B cell (primary cell): ENCODE measurements at regions of chr2 and their contacts with region 1.

Region 1: GRCh38 chr2:130824492-130825061 is 12.1 kb upstream of the ARHGEF4 start:
- DNase-seq: peak; percentile 59
- ATAC-seq: peak; percentile 90
- H3K4me3 ChIP-seq: no peak overlapping the region
- H3K4me3 Mint-ChIP-seq: peak overlapping the region; percentile 64
- H3K27ac ChIP-seq: no peak overlapping the region
- H3K27ac Mint-ChIP-seq: peak overlapping the region; percentile 89
- H3K4me1 ChIP-seq: peaks cover 0 to 17% of the 10 kb centered on the region in 2 donors
- H3K4me1 Mint-ChIP-seq: peaks cover 16% of the 10 kb centered on the region
- H3K27me3 ChIP-seq: no peaks in the 10 kb centered on the region
- H3K27me3 Mint-ChIP-seq: peaks cover 3% of the 10 kb centered on the region
- CTCF ChIP-seq: no peak

Region 2: DNA sequence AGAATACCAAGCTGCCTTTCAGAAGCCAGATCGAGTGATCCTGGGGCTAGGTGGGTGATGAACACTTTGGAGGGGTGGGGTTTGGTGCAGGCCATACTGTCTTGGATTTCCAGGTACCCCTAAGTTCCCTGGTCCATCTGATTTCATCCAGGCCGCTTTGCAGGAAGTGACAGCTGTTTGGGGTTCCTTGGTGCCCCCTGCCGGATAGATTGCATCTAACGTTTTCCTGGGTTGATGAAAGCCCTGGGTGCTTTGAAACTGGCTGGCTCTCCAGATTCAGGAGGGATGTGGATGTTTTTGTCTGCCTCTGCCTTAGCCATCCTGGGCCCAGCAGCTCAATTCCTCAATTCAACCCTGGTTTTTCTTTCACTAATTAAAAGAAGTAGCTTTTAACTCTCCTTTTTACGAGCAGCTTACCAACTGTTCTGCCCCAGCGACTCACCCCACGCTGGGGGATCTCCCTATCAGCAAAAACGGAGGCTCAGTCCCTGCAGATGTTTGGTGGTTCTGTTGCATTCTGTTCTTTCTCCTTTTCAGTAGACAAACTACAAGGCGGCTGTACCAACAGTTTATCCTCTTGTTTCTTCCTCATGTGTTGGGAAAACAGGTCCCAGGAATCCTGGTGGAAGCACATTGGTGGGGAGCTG is 49.2 kb after region 1 on chr2:
- CTCF ChIA-PET with region 1: interaction called, 10 read pairs
- POLR2A ChIA-PET with region 1: no interaction called
- intact Hi-C with region 1: loop called (anchors 1 kb)
- DNase-seq: peak; percentile 65
- ATAC-seq: peak; percentile 78
- H3K4me3 ChIP-seq: no peak overlapping the region
- H3K4me3 Mint-ChIP-seq: no peak overlapping the region
- H3K27ac ChIP-seq: no peak overlapping the region
- H3K27ac Mint-ChIP-seq: no peak overlapping the region
- H3K4me1 ChIP-seq: peaks cover 4 to 7% of the 10 kb centered on the region in 2 donors
- H3K4me1 Mint-ChIP-seq: peaks cover 8% of the 10 kb centered on the region
- H3K27me3 ChIP-seq: no peaks in the 10 kb centered on the region
- H3K27me3 Mint-ChIP-seq: peaks cover 12% of the 10 kb centered on the region
- CTCF ChIP-seq: peak; percentile 60

Region 3: DNA sequence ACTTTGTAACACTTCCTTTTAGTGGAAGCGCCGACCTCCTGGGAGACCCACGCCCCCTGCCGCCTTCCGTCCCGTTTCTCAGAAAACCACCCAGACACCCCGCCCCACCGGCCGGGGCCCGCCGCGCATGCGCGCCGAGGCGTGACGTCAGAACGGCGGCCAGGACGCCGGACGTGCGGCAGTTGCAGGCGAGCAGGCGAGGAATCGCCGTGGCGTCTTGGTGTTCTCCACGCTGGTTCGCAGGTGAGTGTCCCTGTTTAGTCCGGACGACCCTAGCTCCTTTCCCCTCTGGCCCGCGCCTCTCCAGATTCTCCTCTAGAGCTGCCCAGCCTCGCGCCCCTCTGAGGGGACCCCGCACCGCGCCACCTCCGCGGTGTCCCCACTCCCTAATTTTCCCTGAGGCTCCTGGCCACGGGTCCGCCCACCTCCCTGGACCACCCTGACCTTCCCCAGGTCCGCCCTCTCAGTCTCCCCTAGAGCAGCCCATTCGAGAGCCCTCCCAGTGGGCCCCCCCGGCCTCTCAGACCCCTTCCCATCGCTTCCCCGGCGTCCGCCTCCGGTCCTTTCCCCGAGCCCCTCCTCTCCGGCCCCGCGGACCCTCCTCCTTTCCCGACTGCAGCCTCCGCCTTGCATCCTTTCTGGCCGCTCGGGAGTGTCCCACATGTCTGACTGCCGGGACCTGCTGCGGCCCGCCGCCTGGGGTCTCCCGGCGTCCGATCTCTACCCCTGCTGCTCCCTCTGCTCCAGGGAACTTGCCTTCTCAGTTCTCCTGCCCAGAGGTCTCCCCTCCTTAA is 280.8 kb after region 1 on chr2 and contains the start of gene PLEKHB2:
- CTCF ChIA-PET with region 1: no interaction called
- POLR2A ChIA-PET with region 1: no interaction called
- intact Hi-C with region 1: loop called (anchors 1 kb)
- DNase-seq: peak; percentile 95
- ATAC-seq: peak; percentile 88
- H3K4me3 ChIP-seq: peak within 1 kb of the TSS; percentile 47 to 99 (median 91)
- H3K4me3 Mint-ChIP-seq: peak within 1 kb of the TSS; percentile 97
- H3K27ac ChIP-seq: peak within 1 kb of the TSS; percentile 80 to 91
- H3K27ac Mint-ChIP-seq: peak within 1 kb of the TSS; percentile 93
- H3K4me1 ChIP-seq: peaks cover 19 to 20% of the 10 kb centered on the region in 2 donors
- H3K4me1 Mint-ChIP-seq: peaks cover 44% of the 10 kb centered on the region
- H3K27me3 ChIP-seq: no peaks in the 10 kb centered on the region
- H3K27me3 Mint-ChIP-seq: no peaks in the 10 kb centered on the region
- CTCF ChIP-seq: no peak
- total RNA-seq, gene PLEKHB2: 39.5 and 42.1 TPM in 2 replicates